K562 (cell line): ENCODE measurements at regions of chr1 and their contacts with region 1.

Region 1: GRCh38 chr1:43358746-43359693 is at the start of gene CDC20:
- DNase-seq: peak; percentile 97 to 100 (median 98)
- ATAC-seq: peak; percentile 97
- H3K4me3 ChIP-seq: peak within 1 kb of the TSS; percentile 83
- H3K27ac ChIP-seq: peak within 1 kb of the TSS; percentile 90
- H3K4me1 ChIP-seq: peaks cover 25 to 36% of the 10 kb centered on the region in 2 experiments
- H3K27me3 ChIP-seq: no peaks in the 10 kb centered on the region
- CTCF ChIP-seq: no peak; a peak in 1 of 6 replicates
- EP300 ChIP-seq: peak; percentile 56; the same call in 1 of the 2 replicates
- POLR2A ChIP-seq: peak; percentile 90
- RAD21 ChIP-seq: no peak
- polyA plus RNA-seq, gene CDC20: 45.2 to 70.6 TPM

Region 2: GRCh38 chr1:42736150-42736850 is 622.7 kb before region 1 on chr1:
- CTCF ChIA-PET with region 1: no interaction called
- POLR2A ChIA-PET with region 1: no interaction called
- in situ Hi-C with region 1: no loop called
- intact Hi-C with region 1: no loop called
- DNase-seq: peak; percentile 69 to 81 (median 77)
- ATAC-seq: peak; percentile 90
- H3K4me3 ChIP-seq: no peak overlapping the region
- H3K27ac ChIP-seq: no peak overlapping the region
- H3K4me1 ChIP-seq: peaks cover 0 to 45% of the 10 kb centered on the region in 2 experiments; a peak in 3 of 5 replicates
- H3K27me3 ChIP-seq: peaks cover 7 to 49% of the 10 kb centered on the region in 2 experiments; a peak in 4 of 5 replicates
- CTCF ChIP-seq: peak; percentile 69 to 81 (median 73)
- EP300 ChIP-seq: no peak
- POLR2A ChIP-seq: no peak
- RAD21 ChIP-seq: peak in 1 of 2 experiments; percentile 59; a peak in 2 of 4 replicates

Region 3: DNA sequence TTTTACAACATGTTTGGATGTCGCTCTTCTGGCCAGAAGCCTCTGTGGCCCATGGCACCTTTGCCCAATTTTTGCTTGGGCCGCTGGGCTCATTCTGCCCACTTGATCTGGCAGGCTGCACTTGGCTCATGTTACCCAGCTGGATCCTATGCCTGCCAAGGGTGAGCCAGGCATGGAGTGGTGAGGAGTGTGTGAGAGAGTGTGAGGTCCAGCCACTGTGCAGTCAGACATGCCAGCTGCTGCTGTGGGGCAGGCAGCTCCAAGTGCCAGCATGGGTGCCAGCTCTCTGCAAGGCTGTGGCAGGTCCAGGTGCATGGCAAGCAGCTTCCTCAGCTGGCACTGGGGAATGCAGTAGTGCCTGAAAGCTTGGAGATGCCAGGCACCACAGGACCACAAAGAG is 258.0 kb before region 1 on chr1:
- CTCF ChIA-PET with region 1: no interaction called
- POLR2A ChIA-PET with region 1: no interaction called
- in situ Hi-C with region 1: no loop called
- intact Hi-C with region 1: no loop called
- DNase-seq: no peak
- ATAC-seq: no peak
- H3K4me3 ChIP-seq: no peak overlapping the region
- H3K27ac ChIP-seq: no peak overlapping the region
- H3K4me1 ChIP-seq: no peaks in the 10 kb centered on the region
- H3K27me3 ChIP-seq: peaks cover 0 to 17% of the 10 kb centered on the region in 2 experiments; a peak in 2 of 5 replicates
- CTCF ChIP-seq: no peak
- EP300 ChIP-seq: no peak
- POLR2A ChIP-seq: no peak
- RAD21 ChIP-seq: no peak

Region 4: GRCh38 chr1:43238085-43238484 is 120.9 kb before region 1 on chr1:
- CTCF ChIA-PET with region 1: interaction called, 9 read pairs
- POLR2A ChIA-PET with region 1: interaction called, 7 read pairs
- in situ Hi-C with region 1: no loop called
- intact Hi-C with region 1: loop called (anchors 2 kb)
- DNase-seq: peak; percentile 38 to 79 (median 57)
- ATAC-seq: peak; percentile 94
- H3K4me3 ChIP-seq: no peak overlapping the region
- H3K27ac ChIP-seq: no peak overlapping the region
- H3K4me1 ChIP-seq: no peaks in the 10 kb centered on the region
- H3K27me3 ChIP-seq: peaks cover 22 to 66% of the 10 kb centered on the region in 2 experiments
- CTCF ChIP-seq: peak; percentile 79 to 88 (median 87)
- EP300 ChIP-seq: no peak
- POLR2A ChIP-seq: no peak
- RAD21 ChIP-seq: peak; percentile 87 to 95

Region 5: GRCh38 chr1:43329995-43330751 is 28.8 kb before region 1 on chr1:
- CTCF ChIA-PET with region 1: no interaction called
- POLR2A ChIA-PET with region 1: interaction called, 17 read pairs
- in situ Hi-C with region 1: no loop called
- intact Hi-C with region 1: no loop called
- DNase-seq: peak; percentile 97 to 99 (median 97)
- ATAC-seq: peak; percentile 100
- H3K4me3 ChIP-seq: peak overlapping the region; percentile 9; the same call in 1 of the 2 replicates
- H3K27ac ChIP-seq: peak overlapping the region; percentile 93
- H3K4me1 ChIP-seq: peaks cover 15 to 20% of the 10 kb centered on the region in 2 experiments
- H3K27me3 ChIP-seq: no peaks in the 10 kb centered on the region
- CTCF ChIP-seq: no peak
- EP300 ChIP-seq: peak; percentile 80
- POLR2A ChIP-seq: peak; percentile 75
- RAD21 ChIP-seq: no peak

Region 6: DNA sequence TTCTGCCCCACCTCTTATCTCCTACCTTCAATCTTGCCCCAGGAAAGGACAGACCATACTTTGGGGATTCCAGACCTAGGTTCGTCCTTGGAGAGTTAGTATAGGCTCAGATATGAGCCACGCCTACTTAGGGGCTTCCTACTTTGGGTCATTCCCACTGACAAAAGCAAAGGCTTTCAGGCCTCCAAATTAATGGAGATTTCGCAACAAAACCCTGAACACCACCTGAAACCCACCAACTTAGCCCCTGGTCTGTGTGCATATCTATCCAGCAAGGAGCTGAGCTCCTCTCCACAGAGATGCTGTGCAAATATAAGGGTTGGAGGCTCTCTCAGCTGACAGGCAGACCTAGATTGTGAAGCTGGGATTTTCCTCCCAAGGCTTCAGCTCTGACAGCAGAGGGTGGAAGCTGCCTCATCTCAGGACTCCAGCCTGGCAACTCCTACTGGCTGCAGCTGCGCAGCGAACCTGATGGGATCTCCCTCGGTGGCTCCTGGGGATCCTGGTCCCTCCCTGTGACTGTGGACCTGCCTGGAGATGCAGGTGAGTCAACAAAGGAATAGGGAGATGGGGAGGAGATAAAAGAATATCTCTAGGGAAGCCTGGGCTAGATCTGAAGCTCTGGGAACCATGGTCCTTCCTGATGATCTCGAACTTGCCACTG is 19.3 kb before region 1 on chr1:
- CTCF ChIA-PET with region 1: no interaction called
- POLR2A ChIA-PET with region 1: interaction called, 10 read pairs
- in situ Hi-C with region 1: no loop called
- intact Hi-C with region 1: no loop called
- DNase-seq: no peak
- ATAC-seq: no peak
- H3K4me3 ChIP-seq: no peak overlapping the region
- H3K27ac ChIP-seq: no peak overlapping the region
- H3K4me1 ChIP-seq: peaks cover 0 to 11% of the 10 kb centered on the region in 2 experiments; a peak in 3 of 5 replicates
- H3K27me3 ChIP-seq: peaks cover 8 to 21% of the 10 kb centered on the region in 2 experiments; a peak in 4 of 5 replicates
- CTCF ChIP-seq: no peak
- EP300 ChIP-seq: no peak
- POLR2A ChIP-seq: no peak
- RAD21 ChIP-seq: no peak

Region 7: GRCh38 chr1:43414634-43415223 is 55.7 kb after region 1 on chr1:
- CTCF ChIA-PET with region 1: no interaction called
- POLR2A ChIA-PET with region 1: interaction called, 3 read pairs
- in situ Hi-C with region 1: no loop called
- intact Hi-C with region 1: loop called (anchors 1 kb)
- DNase-seq: peak; percentile 82 to 92 (median 90)
- ATAC-seq: peak; percentile 99
- H3K4me3 ChIP-seq: no peak overlapping the region
- H3K27ac ChIP-seq: no peak overlapping the region
- H3K4me1 ChIP-seq: no peaks in the 10 kb centered on the region; a peak in 1 of 5 replicates
- H3K27me3 ChIP-seq: no peaks in the 10 kb centered on the region
- CTCF ChIP-seq: peak; percentile 79 to 95 (median 93)
- EP300 ChIP-seq: no peak
- POLR2A ChIP-seq: no peak
- RAD21 ChIP-seq: peak; percentile 90 to 95

Region 8: GRCh38 chr1:43719063-43719462 is 360.0 kb after region 1 on chr1:
- CTCF ChIA-PET with region 1: no interaction called
- POLR2A ChIA-PET with region 1: no interaction called
- in situ Hi-C with region 1: no loop called
- intact Hi-C with region 1: no loop called
- DNase-seq: no peak
- ATAC-seq: 0 out of 3 replicates have a peak, but pooled peaks have one; percentile 23
- H3K4me3 ChIP-seq: no peak overlapping the region
- H3K27ac ChIP-seq: no peak overlapping the region
- H3K4me1 ChIP-seq: peaks cover 3 to 5% of the 10 kb centered on the region in 2 experiments; a peak in 2 of 5 replicates
- H3K27me3 ChIP-seq: no peaks in the 10 kb centered on the region
- CTCF ChIP-seq: no peak
- EP300 ChIP-seq: no peak
- POLR2A ChIP-seq: no peak
- RAD21 ChIP-seq: no peak